H1 (cell line): ENCODE measurements at regions of chr3 and their contacts with region 1.

Region 1: DNA sequence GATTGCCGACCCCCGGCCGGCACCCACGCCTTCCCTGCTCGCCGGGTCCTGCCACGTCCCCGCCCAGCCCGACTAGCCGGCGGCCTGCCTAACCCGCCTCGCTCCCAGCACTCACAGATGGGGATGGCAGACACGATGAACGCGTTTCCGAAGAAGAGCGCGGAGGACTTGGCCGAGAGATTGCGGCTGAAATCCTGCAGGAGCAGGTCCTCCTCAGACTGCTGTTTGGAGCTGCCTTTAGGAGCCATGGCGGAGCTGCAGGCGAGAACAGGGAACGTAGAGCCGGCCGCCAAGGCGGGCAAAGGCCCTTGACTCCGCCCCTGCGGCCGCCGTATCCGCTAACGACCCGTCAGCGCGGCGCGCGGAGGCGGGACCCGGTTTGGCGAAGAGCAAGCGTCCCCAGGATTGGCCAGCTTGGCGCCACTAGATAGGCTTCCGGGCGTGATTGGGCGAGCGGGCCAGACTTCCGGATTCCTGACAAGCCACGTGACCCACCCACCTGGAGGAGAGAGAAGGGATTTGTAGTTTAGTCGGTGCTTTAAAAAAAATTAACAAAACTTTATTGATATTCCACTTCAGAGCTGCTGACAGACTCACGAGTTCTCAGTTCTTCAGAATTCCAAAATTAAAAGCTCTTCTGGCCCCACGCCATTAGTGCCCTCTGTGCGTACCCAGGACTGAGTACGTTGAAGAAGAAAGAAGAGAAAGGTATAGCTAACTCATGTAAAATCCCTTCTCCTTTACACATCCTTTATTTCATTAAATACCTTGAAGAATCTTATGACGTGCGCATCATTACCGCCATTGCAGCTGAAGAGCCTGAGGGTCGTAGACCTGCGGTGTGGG is at the start of gene SSR3:
- DNase-seq: peak; percentile 96
- H3K4me3 ChIP-seq: peak within 1 kb of the TSS; percentile 81 to 100 (median 99)
- H3K27ac ChIP-seq: peak within 1 kb of the TSS; percentile 98
- H3K4me1 ChIP-seq: peaks cover 0 to 2% (median 0%) of the 10 kb centered on the region in 4 experiments; a peak in 2 of 7 replicates
- H3K27me3 ChIP-seq: no peaks in the 10 kb centered on the region
- CTCF ChIP-seq: no peak
- EP300 ChIP-seq: peak in 1 of 2 experiments; percentile 49; a peak in 1 of 3 replicates
- POLR2A ChIP-seq: peak; percentile 87 to 92
- RAD21 ChIP-seq: 0 out of 4 replicates have a peak, but pooled peaks of 1 of the 2 experiments have one; percentile 8
- total RNA-seq, gene SSR3: 192 and 208 TPM in 2 replicates

Region 2: DNA sequence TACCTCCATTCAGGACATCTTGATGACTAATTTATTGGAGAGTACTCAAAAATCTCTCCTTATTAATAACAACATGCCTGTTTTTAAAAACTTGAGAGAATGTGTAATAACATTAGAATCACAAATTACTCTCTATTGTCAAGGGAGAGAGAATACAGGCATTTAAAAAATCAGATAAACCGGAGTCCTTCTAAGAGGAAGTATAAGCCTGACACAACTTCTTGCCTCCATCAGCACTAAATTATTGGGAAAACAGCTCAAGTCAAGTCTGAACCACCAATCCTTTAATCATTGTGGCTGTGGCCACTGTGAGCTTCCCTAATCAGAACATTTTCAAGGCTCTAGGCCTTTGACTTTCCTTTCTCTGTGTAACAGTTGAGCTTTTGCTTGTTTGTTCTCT is 38.1 kb before region 1 on chr3:
- CTCF ChIA-PET with region 1: no interaction called
- POLR2A ChIA-PET with region 1: no interaction called
- DNase-seq: no peak
- H3K4me3 ChIP-seq: no peak overlapping the region
- H3K27ac ChIP-seq: no peak overlapping the region
- H3K4me1 ChIP-seq: peaks cover 0 to 3% (median 0%) of the 10 kb centered on the region in 4 experiments; a peak in 1 of 7 replicates
- H3K27me3 ChIP-seq: no peaks in the 10 kb centered on the region
- CTCF ChIP-seq: no peak
- EP300 ChIP-seq: no peak
- POLR2A ChIP-seq: no peak
- RAD21 ChIP-seq: no peak

Region 3: DNA sequence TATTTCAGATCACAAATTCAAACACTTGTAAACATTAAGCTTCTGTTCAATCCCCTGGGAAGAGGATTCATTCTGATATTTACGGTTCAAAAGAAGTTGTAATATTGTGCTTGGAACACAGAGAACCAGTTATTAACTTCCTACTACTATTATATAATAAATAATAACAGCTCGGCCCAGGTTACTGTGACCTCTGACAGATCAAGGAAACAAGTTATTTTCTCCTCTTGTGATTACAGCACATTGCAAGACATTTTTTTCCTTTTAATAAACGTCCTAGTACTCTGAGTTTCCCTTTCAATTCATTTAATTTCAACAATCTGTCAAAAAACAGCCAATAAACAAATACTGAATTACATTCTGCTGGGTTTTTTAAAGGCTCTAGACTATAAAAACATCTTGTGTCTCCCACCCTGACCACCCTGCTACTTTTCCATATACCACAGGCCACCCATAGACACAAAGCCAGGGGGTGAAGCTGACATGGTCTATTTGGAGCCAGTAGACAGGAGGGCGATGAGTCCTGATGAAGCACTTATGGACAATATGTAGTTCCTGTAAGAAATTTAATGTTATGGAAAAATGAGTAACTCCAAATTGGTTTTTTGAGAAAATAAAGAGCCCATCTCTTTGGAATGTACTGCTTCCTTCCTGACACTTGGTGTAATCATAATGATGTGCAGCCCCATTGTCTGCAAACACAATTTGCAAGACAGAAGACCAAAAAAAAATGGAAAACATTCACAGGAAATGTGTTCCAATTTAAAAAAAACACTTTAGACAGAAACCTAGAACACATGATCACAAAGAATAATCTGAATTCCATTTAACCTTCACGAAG is 12.1 kb before region 1 on chr3:
- CTCF ChIA-PET with region 1: interaction called, 7 read pairs
- POLR2A ChIA-PET with region 1: interaction called, 19 read pairs
- DNase-seq: no peak
- H3K4me3 ChIP-seq: no peak overlapping the region
- H3K27ac ChIP-seq: no peak overlapping the region
- H3K4me1 ChIP-seq: no peaks in the 10 kb centered on the region
- H3K27me3 ChIP-seq: no peaks in the 10 kb centered on the region
- CTCF ChIP-seq: no peak
- EP300 ChIP-seq: no peak
- POLR2A ChIP-seq: no peak
- RAD21 ChIP-seq: no peak

Region 4: GRCh38 chr3:156605686-156606605 is 50.9 kb after region 1 on chr3:
- CTCF ChIA-PET with region 1: interaction called, 4 read pairs
- POLR2A ChIA-PET with region 1: interaction called, 13 read pairs
- DNase-seq: peak; percentile 41 to 63
- H3K4me3 ChIP-seq: peak overlapping the region; percentile 29 to 58 (median 50)
- H3K27ac ChIP-seq: 0 out of 2 replicates have a peak overlapping the region, but pooled peaks have one; percentile 13
- H3K4me1 ChIP-seq: peaks cover 0 to 6% (median 2%) of the 10 kb centered on the region in 4 experiments; a peak in 2 of 7 replicates
- H3K27me3 ChIP-seq: no peaks in the 10 kb centered on the region
- CTCF ChIP-seq: no peak
- EP300 ChIP-seq: no peak
- POLR2A ChIP-seq: peak in 1 of 2 experiments; percentile 46; a peak in 2 of 3 replicates
- RAD21 ChIP-seq: no peak

Region 5: GRCh38 chr3:156674046-156674910 is 119.2 kb after region 1 on chr3 and contains the start of gene TIPARP:
- CTCF ChIA-PET with region 1: interaction called, 12 read pairs
- POLR2A ChIA-PET with region 1: interaction called, 19 read pairs
- DNase-seq: peak; percentile 82 to 95
- H3K4me3 ChIP-seq: peak within 1 kb of the TSS; percentile 32 to 91 (median 78)
- H3K27ac ChIP-seq: peak within 1 kb of the TSS; percentile 47; the same call in 1 of the 2 replicates
- H3K4me1 ChIP-seq: no peaks in the 10 kb centered on the region; a peak in 1 of 7 replicates
- H3K27me3 ChIP-seq: no peaks in the 10 kb centered on the region; a peak in 1 of 7 replicates
- CTCF ChIP-seq: peak; percentile 75 to 89 (median 83)
- EP300 ChIP-seq: peak; percentile 1 to 38; a peak in 2 of 3 replicates
- POLR2A ChIP-seq: peak; percentile 73 to 88
- RAD21 ChIP-seq: peak; percentile 75 to 80
- total RNA-seq, gene TIPARP: 5.5 and 5.8 TPM in 2 replicates

Region 6: DNA sequence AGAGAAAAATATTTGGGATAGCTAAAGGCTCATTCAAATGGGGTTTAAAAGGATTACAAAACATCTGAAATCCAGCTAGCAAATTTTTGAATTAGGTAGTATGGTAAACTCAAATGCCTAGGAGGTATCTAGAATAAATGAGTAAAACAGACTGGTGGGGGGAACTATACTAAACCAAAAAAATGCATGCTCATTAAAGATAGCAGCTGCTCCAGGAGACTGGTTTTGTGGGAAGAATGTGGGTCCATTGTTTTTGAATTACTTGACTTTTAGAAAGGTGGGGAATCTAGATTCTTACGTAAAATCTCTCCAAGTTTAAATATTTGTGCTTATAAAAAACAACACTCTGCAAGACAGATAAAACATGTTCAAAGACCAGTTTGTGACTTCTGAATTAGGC is 344.9 kb after region 1 on chr3:
- CTCF ChIA-PET with region 1: no interaction called
- POLR2A ChIA-PET with region 1: no interaction called
- DNase-seq: no peak
- H3K4me3 ChIP-seq: no peak overlapping the region
- H3K27ac ChIP-seq: no peak overlapping the region
- H3K4me1 ChIP-seq: peaks cover 0 to 3% (median under 1%) of the 10 kb centered on the region in 4 experiments; a peak in 1 of 7 replicates
- H3K27me3 ChIP-seq: no peaks in the 10 kb centered on the region
- CTCF ChIP-seq: no peak
- EP300 ChIP-seq: no peak
- POLR2A ChIP-seq: no peak
- RAD21 ChIP-seq: no peak